Activated CD4-positive, alpha-beta T cell treated with anti-CD3 and anti-CD28 coated beads for 36 hours (primary cell): ENCODE measurements at regions of chr7 and their contacts with region 1.

Region 1: GRCh38 chr7:140175221-140176121 is 1.3 kb downstream of the KDM7A start:
- DNase-seq: peak; percentile 95
- ATAC-seq: peak; percentile 70
- H3K4me3 Mint-ChIP-seq: peak overlapping the region; percentile 96
- H3K27ac Mint-ChIP-seq: peak overlapping the region; percentile 83
- H3K4me1 Mint-ChIP-seq: peaks cover 49% of the 10 kb centered on the region
- H3K27me3 Mint-ChIP-seq: peaks cover 3% of the 10 kb centered on the region

Region 2: GRCh38 chr7:139359366-139360209 is 815.9 kb before region 1 on chr7 and contains the start of gene LUC7L2:
- CTCF ChIA-PET with region 1: no interaction called
- POLR2A ChIA-PET with region 1: no interaction called
- intact Hi-C with region 1: loop called (anchors 1 to 5 kb)
- DNase-seq: peak; percentile 100
- ATAC-seq: peak; percentile 75
- H3K4me3 Mint-ChIP-seq: peak within 1 kb of the TSS; percentile 99
- H3K27ac Mint-ChIP-seq: peak within 1 kb of the TSS; percentile 98
- H3K4me1 Mint-ChIP-seq: peaks cover 25% of the 10 kb centered on the region
- H3K27me3 Mint-ChIP-seq: no peaks in the 10 kb centered on the region
- total RNA-seq, gene LUC7L2: 124 to 126 TPM

Region 3: GRCh38 chr7:140062528-140063299 is 112.8 kb before region 1 on chr7 and contains the start of gene PARP12:
- CTCF ChIA-PET with region 1: interaction called, 3 read pairs
- POLR2A ChIA-PET with region 1: interaction called, 5 read pairs
- intact Hi-C with region 1: loop called (anchors 1 to 5 kb)
- DNase-seq: peak; percentile 91
- ATAC-seq: peak; percentile 65
- H3K4me3 Mint-ChIP-seq: peak within 1 kb of the TSS; percentile 78
- H3K27ac Mint-ChIP-seq: peak within 1 kb of the TSS; percentile 75
- H3K4me1 Mint-ChIP-seq: peaks cover 36% of the 10 kb centered on the region
- H3K27me3 Mint-ChIP-seq: no peaks in the 10 kb centered on the region
- total RNA-seq, gene PARP12: 25.7 to 28.7 TPM

Region 4: GRCh38 chr7:140209866-140210609 is 34.6 kb after region 1 on chr7:
- CTCF ChIA-PET with region 1: interaction called, 5 read pairs
- POLR2A ChIA-PET with region 1: interaction called, 6 read pairs
- intact Hi-C with region 1: loop called (anchors 1 to 5 kb)
- DNase-seq: peak; percentile 83
- ATAC-seq: peak; percentile 62
- H3K4me3 Mint-ChIP-seq: peak overlapping the region; percentile 2
- H3K27ac Mint-ChIP-seq: peak overlapping the region; percentile 88
- H3K4me1 Mint-ChIP-seq: peaks cover 80% of the 10 kb centered on the region
- H3K27me3 Mint-ChIP-seq: no peaks in the 10 kb centered on the region

Region 5: GRCh38 chr7:140304191-140304799 is 128.8 kb after region 1 on chr7:
- CTCF ChIA-PET with region 1: interaction called, 4 read pairs
- POLR2A ChIA-PET with region 1: no interaction called
- intact Hi-C with region 1: loop called (anchors 1 kb)
- DNase-seq: peak; percentile 56
- ATAC-seq: peak; percentile 95
- H3K4me3 Mint-ChIP-seq: no peak overlapping the region
- H3K27ac Mint-ChIP-seq: peak overlapping the region; percentile 83
- H3K4me1 Mint-ChIP-seq: peaks cover 16% of the 10 kb centered on the region
- H3K27me3 Mint-ChIP-seq: no peaks in the 10 kb centered on the region

Region 6: DNA sequence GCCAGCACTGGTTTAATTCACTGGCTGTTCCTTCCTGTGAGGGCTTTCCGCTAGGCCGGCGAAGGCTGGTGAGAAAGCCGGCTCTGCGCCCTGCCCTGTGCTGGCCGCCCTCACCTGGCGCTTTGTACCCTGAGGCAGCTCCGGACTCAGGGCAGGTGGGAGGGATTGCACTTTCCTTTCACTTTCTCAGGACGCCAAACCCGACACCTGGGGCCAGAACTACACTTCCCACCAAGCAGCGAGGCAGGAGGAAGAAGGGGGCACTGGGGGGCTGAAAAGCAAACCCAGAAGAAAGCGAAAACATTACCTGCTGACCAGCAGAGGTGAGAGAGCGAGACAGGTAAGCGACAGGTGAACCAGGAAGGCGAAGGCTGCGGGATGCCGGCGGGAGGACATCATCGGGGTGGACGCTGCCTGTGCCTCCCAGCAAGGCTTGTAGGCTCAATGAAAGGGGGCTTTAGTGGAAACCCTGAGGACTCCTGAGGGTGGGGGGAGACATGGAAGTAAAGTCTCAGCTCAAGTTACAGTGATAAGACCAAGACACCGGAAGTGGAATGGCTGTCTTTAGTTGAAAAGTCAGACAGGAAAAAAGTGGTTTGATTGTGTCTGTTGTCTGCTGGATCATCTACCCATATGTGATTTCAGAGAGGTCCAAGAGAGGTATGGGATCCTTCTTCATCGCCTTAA is 228.6 kb after region 1 on chr7 and contains the start of gene RAB19:
- CTCF ChIA-PET with region 1: interaction called, 3 read pairs
- POLR2A ChIA-PET with region 1: no interaction called
- intact Hi-C with region 1: loop called in 1 of 2 experiments (anchors 1 kb)
- DNase-seq: peak; percentile 63
- ATAC-seq: peak; percentile 77
- H3K4me3 Mint-ChIP-seq: peak within 1 kb of the TSS; percentile 90
- H3K27ac Mint-ChIP-seq: peak within 1 kb of the TSS; percentile 97
- H3K4me1 Mint-ChIP-seq: peaks cover 35% of the 10 kb centered on the region
- H3K27me3 Mint-ChIP-seq: no peaks in the 10 kb centered on the region
- total RNA-seq, gene RAB19: 11.3 to 12.8 TPM

Region 7: DNA sequence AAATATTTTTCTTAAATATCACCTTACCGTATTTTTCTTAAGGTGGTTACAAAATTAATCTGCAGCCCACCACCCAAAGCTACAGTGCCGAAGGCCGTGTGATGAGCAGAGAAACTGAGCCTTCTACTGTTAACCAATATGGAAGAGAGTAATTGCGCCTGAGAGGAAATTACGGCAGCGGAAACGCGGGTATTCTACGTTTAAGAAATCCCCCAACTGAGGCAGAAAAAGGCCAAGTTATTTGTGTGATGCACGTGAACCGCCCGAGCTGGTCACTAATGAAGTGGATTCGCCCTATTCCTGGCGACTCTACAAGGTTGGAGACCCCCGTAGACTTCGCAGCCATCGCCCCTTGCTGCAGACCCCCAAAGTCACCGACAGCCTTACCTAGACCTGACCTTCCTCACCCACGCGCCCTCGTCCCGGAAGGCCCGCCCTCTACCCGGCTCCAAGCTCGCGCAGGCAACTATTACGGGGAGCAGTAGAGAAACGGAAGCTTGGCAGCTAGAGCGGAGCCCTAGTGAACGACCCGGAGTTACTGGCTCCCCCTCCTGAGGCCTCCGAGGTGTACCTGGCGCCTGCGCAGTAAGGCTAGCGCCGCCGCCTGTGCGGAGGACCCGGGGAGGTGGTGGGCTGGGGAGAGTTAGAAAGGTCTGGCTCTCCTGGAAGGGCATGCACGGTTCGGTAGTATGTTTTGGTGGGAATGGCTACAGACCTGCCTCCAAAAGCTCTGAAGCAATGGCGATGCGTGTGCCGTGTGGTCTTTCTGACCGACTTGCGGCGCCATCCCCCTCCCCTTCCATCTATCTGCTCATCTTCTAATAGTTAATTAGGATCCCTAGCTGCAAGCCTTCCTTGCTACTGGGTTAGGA is 839.3 kb after region 1 on chr7 and contains the start of gene MRPS33:
- CTCF ChIA-PET with region 1: no interaction called
- POLR2A ChIA-PET with region 1: no interaction called
- intact Hi-C with region 1: loop called (anchors 2 to 10 kb)
- DNase-seq: peak; percentile 97
- ATAC-seq: peak; percentile 91
- H3K4me3 Mint-ChIP-seq: peak within 1 kb of the TSS; percentile 96
- H3K27ac Mint-ChIP-seq: peak within 1 kb of the TSS; percentile 99
- H3K4me1 Mint-ChIP-seq: peaks cover 32% of the 10 kb centered on the region
- H3K27me3 Mint-ChIP-seq: peaks cover 9% of the 10 kb centered on the region
- total RNA-seq, gene MRPS33: 101 to 104 TPM